Vagina (tissue), 2 donors: ENCODE measurements at regions of chr13 and their contacts with region 1.

Region 1: DNA sequence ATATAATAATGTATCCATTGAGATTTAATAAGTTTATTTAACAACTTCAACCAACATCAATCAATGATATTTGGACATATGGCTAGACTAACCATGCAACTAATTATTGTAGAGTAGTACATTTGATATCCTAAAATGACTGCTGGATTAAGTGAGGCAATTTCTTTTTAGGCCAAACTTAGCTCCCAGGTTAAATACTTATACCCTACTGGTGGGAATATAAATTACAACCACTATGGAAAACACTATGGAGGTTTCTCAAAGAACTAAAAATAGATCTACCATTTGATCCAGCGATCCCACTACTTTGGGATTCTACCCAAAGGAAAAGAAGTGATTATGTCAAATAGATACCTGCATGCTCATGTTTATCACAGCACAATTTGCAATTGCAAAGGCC is 345.8 kb downstream of the RBM26 start:
- DNase-seq: no peak
- H3K4me3 ChIP-seq: no peak overlapping the region
- H3K27ac ChIP-seq: no peak overlapping the region
- H3K4me1 ChIP-seq: no peaks in the 10 kb centered on the region
- H3K27me3 ChIP-seq: no peaks in the 10 kb centered on the region
- CTCF ChIP-seq: no peak
- POLR2A ChIP-seq: no peak

Region 2: GRCh38 chr13:80973721-80974120 is 1913.5 kb after region 1 on chr13:
- intact Hi-C with region 1: loop called (anchors 5 kb)
- DNase-seq: no peak
- H3K4me3 ChIP-seq: no peak overlapping the region
- H3K27ac ChIP-seq: no peak overlapping the region
- H3K4me1 ChIP-seq: no peaks in the 10 kb centered on the region
- H3K27me3 ChIP-seq: no peaks in the 10 kb centered on the region
- CTCF ChIP-seq: no peak
- POLR2A ChIP-seq: no peak